Activated CD4-positive, alpha-beta T cell treated with anti-CD3 and anti-CD28 coated beads, Interleukin-2, amount 10 ng/mL, durations not matched to agents 24 days and 14 days (primary cell): ENCODE measurements at regions of chr21 and their contacts with region 1.

Region 1: DNA sequence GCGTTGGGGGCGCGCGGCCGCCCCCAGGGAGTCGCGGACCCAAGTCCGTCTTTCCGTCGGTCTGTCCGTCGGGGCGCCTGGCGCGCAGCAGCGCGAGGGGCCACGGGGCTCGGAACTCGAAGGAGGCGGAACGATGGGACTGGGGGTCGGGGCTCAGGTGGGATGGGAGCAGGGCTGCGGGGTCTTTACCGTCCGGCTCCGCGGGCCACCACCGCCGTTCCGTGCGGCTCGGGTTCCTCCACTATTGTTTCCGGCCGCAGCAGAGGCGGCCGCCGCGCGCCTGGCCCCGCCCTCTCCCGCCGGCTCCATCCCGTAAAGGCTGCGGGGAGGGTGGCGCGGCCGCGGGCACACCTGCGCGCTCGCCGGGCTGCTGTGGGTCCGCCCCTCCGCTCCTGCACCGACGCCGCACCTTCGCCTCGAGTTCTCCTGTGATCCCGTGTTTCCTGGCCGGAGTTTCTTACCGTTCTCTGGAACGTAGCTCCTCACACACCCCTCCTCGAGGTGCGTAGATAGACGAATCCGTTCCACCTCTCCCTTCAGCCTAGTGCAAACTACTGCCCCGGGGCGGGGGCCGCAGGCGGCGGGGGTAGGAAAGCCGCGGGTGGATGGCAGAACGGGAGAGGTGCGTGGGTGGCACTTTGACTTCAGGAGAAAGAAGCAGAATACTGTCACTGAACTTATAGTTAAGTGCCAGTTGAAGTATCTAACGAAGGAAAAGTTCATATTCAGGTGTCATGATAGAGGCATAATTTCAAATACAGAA is at the start of gene C21orf91:
- DNase-seq: peak; percentile 97
- H3K4me3 Mint-ChIP-seq: peak within 1 kb of the TSS; percentile 85
- H3K27ac Mint-ChIP-seq: peak within 1 kb of the TSS; percentile 100
- H3K4me1 Mint-ChIP-seq: peaks cover 36% of the 10 kb centered on the region
- H3K27me3 Mint-ChIP-seq: no peaks in the 10 kb centered on the region
- total RNA-seq, gene C21orf91: 37.0 and 39.6 TPM in 2 replicates

Region 2: GRCh38 chr21:16676391-16676790 is 1142.9 kb before region 1 on chr21:
- intact Hi-C with region 1: no loop called
- DNase-seq: no peak
- H3K4me3 Mint-ChIP-seq: no peak overlapping the region
- H3K27ac Mint-ChIP-seq: no peak overlapping the region
- H3K4me1 Mint-ChIP-seq: no peaks in the 10 kb centered on the region
- H3K27me3 Mint-ChIP-seq: no peaks in the 10 kb centered on the region

Region 3: DNA sequence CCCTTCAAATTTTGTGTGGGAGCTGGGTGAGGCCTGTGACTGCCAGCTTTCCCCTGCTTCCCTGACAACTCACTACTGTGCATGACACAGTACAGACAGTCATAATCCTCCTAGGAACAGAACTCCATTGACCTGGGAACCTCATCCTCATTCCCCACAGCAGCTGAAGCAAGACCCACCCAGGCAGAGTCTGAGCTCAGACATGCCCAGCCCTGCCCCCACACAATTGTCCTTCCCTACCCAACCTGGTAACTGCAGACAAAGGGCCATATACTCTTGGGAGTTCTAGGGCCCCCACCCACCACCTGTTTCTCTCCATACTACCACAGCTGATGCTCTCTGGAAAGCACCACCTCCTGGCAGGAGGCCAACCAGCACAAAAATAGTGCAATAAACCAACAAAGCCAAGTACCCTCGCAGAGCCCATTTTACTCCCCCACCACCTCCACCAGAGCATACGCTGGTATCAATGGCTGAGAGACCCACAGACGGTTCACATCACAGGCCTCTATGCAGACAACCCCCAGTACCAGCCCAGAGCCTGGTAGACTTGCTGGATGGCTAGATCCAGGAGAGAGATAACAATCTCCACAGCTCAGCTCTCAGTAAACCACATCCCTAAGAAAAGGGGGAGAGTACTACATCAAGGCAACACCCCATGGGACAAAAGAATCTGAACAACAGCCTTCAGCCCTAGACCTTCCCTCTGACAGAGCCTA is 466.2 kb before region 1 on chr21:
- intact Hi-C with region 1: no loop called
- DNase-seq: no peak
- H3K4me3 Mint-ChIP-seq: no peak overlapping the region
- H3K27ac Mint-ChIP-seq: no peak overlapping the region
- H3K4me1 Mint-ChIP-seq: no peaks in the 10 kb centered on the region
- H3K27me3 Mint-ChIP-seq: no peaks in the 10 kb centered on the region

Region 4: DNA sequence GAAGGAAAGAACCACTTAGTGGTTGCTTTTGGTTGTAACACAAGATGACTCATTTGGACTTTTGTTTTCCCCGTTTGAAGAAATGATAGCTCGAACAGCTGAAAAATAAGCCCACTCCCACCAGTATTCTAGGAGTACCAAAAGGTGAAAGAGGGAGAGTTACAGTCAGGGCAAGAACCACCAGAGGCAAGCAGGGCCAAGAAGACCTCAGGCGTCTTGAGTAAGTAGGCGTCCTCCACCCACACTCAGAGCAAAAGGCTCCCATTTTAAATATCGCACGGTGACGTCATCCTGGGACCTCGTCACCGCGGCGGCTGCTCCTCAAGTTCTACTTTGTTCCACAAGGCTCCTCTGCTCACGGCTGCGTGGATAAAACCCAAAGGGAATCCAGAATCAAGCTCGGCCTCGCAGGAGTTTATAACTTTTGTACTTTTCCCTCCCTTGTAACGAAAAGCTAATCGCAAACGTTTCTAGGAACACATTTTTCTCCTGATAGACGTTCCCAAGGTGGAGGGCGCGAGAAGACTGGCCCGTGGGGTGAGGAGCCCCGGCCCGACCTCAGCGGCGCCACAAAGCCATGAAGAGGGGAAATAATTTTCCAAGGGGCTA is 207.8 kb before region 1 on chr21:
- intact Hi-C with region 1: loop called (anchors 1 kb)
- DNase-seq: peak; percentile 94
- H3K4me3 Mint-ChIP-seq: peak overlapping the region; percentile 84
- H3K27ac Mint-ChIP-seq: peak overlapping the region; percentile 96
- H3K4me1 Mint-ChIP-seq: peaks cover 46% of the 10 kb centered on the region
- H3K27me3 Mint-ChIP-seq: no peaks in the 10 kb centered on the region

Region 5: GRCh38 chr21:17688912-17689874 is 130.1 kb before region 1 on chr21:
- intact Hi-C with region 1: loop called (anchors 5 kb)
- DNase-seq: peak; percentile 82
- H3K4me3 Mint-ChIP-seq: no peak overlapping the region
- H3K27ac Mint-ChIP-seq: no peak overlapping the region
- H3K4me1 Mint-ChIP-seq: peaks cover 38% of the 10 kb centered on the region
- H3K27me3 Mint-ChIP-seq: peaks cover 2% of the 10 kb centered on the region

Region 6: GRCh38 chr21:17708522-17709265 is 110.6 kb before region 1 on chr21:
- intact Hi-C with region 1: loop called (anchors 1 kb)
- DNase-seq: no peak
- H3K4me3 Mint-ChIP-seq: no peak overlapping the region
- H3K27ac Mint-ChIP-seq: no peak overlapping the region
- H3K4me1 Mint-ChIP-seq: peaks cover 27% of the 10 kb centered on the region
- H3K27me3 Mint-ChIP-seq: peaks cover 6% of the 10 kb centered on the region

Region 7: DNA sequence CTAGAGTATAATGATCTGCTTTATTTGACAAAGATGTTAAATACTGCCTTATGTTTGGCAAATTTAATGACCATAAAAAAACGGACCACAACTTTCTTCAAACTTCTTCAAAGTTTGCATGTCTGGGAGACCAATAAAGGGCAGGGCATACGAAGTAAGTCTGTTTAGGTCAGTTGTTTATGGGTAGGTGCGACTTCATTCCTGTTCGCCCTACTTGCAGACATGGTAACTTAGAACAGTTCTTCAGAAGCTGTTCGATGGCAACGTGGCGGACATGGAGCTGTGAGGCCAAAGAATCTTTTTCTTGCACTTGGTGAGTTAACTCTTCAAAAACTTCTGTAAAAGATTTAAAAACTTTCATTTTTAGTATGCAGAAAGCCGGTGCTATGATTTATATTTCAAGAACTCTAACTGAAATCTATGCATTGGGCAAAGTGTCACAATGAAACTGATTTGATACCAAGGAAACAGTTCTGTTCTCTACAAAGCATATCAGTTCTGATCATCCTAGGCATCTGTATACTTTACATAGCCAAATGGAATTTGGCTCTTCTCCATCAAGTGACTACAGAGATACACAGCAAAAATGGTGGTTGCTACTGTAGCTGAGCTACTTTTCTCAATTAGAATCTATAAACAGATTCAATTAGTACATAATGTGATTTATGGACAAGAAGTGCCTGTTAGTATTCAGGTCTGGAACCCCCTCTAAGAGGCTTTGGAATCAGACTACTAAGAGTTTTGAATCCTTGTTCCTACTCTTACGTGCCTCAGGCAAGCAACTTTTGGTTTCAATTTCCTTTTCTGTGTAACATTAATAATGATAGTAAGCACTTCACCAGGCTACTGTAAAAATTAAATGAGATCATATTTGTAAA is 25.8 kb before region 1 on chr21:
- intact Hi-C with region 1: loop called (anchors 1 kb)
- DNase-seq: peak; percentile 68
- H3K4me3 Mint-ChIP-seq: peak overlapping the region; percentile 79
- H3K27ac Mint-ChIP-seq: peak overlapping the region; percentile 73
- H3K4me1 Mint-ChIP-seq: peaks cover 53% of the 10 kb centered on the region
- H3K27me3 Mint-ChIP-seq: no peaks in the 10 kb centered on the region

Region 8: GRCh38 chr21:17848228-17848627 is 28.9 kb after region 1 on chr21:
- intact Hi-C with region 1: no loop called
- DNase-seq: no peak
- H3K4me3 Mint-ChIP-seq: no peak overlapping the region
- H3K27ac Mint-ChIP-seq: no peak overlapping the region
- H3K4me1 Mint-ChIP-seq: no peaks in the 10 kb centered on the region
- H3K27me3 Mint-ChIP-seq: no peaks in the 10 kb centered on the region

Region 9: DNA sequence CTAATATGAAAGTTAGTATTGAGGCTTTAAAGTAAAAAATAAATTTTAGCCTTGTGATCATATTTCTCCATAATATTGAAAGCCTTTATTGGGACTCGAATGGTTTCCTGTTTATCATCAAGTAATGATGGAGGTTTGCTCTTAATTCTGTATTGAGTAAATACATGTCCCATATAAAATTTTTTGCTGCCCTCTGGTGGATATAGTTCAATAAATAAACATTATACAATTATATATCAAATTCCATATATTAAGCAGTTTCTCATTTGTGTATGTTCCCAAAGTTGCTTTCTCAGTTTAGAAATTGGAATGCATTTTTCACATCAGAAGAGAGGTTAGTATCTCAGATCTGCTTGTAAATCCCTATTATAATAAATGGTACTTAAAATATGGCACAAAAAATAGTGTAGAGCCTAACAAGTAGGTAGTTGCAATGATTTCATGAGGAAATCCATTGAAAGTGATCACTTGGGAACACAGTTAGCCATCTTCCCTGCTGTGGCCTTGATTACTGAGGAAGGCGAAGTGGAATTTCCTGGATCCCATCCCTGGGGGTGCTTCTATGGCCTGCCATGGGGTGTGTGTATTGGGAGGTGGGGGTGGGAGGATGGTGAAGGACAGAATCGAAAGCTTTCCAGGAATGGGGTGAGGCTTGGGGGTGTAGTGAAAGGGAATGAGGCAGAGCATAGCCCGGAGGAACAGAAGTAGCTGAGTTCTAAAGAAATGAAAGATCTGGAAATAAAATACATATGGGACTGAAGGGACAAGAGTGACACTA is 83.9 kb after region 1 on chr21:
- intact Hi-C with region 1: loop called (anchors 5 kb)
- DNase-seq: no peak
- H3K4me3 Mint-ChIP-seq: no peak overlapping the region
- H3K27ac Mint-ChIP-seq: no peak overlapping the region
- H3K4me1 Mint-ChIP-seq: peaks cover 13% of the 10 kb centered on the region
- H3K27me3 Mint-ChIP-seq: peaks cover 3% of the 10 kb centered on the region